IMR-90 (cell line): ENCODE measurements at regions of chr12 and their contacts with region 1.

Region 1: DNA sequence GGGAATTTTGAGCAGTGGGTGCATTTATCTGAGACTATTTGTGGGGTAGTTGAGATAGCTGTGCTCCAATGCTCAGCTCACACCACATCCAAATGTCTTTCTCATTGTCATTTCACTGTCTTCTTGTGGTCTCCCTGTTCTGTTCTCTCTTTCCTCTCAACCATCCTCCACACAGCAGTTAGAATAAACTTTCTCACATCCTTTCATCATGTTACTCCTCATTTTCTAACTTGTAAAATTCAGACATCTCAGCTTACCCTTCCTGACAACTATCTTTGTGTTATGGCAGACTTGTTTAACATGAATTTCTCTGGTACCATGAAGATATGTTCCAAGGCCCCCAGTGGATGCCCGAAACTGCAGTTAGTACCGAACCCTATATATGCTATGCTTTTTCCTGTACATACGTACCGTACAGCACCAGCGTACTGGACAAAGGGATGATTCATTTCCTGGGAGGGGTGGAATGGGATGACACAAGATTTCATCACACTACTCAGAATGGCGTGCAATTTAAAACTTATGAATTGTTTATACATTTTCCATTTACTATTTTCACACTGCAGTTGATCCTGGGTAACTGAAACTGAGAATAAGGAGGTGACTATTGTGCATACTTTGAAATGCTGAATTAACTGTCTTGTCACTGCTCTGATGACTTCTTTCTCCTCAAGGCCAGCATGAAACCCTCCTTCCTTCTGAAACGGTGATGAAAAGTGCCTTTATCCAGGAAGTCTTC is 177.1 kb upstream of the SLC38A2 start:
- DNase-seq: peak; percentile 97
- ATAC-seq: peak; percentile 68
- H3K4me3 ChIP-seq: peak overlapping the region; percentile 22; the same call in 1 of the 2 replicates
- H3K27ac ChIP-seq: peak overlapping the region; percentile 87
- H3K4me1 ChIP-seq: peaks cover 23% of the 10 kb centered on the region
- H3K27me3 ChIP-seq: no peaks in the 10 kb centered on the region
- CTCF ChIP-seq: no peak
- POLR2A ChIP-seq: peak; percentile 74
- RAD21 ChIP-seq: no peak

Region 2: GRCh38 chr12:46523863-46524770 is 25.6 kb before region 1 on chr12:
- CTCF ChIA-PET with region 1: no interaction called
- POLR2A ChIA-PET with region 1: interaction called, 3 read pairs
- dilution Hi-C with region 1: no loop called
- in situ Hi-C with region 1: no loop called
- intact Hi-C with region 1: loop called (anchors 1 kb)
- DNase-seq: peak; percentile 100
- ATAC-seq: peak; percentile 82
- H3K4me3 ChIP-seq: peak overlapping the region; percentile 47
- H3K27ac ChIP-seq: peak overlapping the region; percentile 94
- H3K4me1 ChIP-seq: peaks cover 25% of the 10 kb centered on the region
- H3K27me3 ChIP-seq: no peaks in the 10 kb centered on the region
- CTCF ChIP-seq: no peak
- POLR2A ChIP-seq: peak; percentile 83
- RAD21 ChIP-seq: peak; percentile 21; the same call in 1 of the 2 replicates